T-cell (primary cell): ENCODE measurements at regions of chr15 and their contacts with region 1.

Region 1: GRCh38 chr15:72361176-72361575 is 14.6 kb downstream of the HEXA start:
- DNase-seq: no peak
- ATAC-seq: no peak
- H3K4me3 ChIP-seq: no peak overlapping the region
- H3K4me3 Mint-ChIP-seq: no peak overlapping the region
- H3K27ac ChIP-seq: no peak overlapping the region
- H3K27ac Mint-ChIP-seq: no peak overlapping the region
- H3K4me1 ChIP-seq: peaks cover 0 to 13% of the 10 kb centered on the region in 2 experiments
- H3K4me1 Mint-ChIP-seq: peaks cover 20 to 32% (median 30%) of the 10 kb centered on the region in 3 donors
- H3K27me3 ChIP-seq: no peaks in the 10 kb centered on the region
- H3K27me3 Mint-ChIP-seq: no peaks in the 10 kb centered on the region

Region 2: DNA sequence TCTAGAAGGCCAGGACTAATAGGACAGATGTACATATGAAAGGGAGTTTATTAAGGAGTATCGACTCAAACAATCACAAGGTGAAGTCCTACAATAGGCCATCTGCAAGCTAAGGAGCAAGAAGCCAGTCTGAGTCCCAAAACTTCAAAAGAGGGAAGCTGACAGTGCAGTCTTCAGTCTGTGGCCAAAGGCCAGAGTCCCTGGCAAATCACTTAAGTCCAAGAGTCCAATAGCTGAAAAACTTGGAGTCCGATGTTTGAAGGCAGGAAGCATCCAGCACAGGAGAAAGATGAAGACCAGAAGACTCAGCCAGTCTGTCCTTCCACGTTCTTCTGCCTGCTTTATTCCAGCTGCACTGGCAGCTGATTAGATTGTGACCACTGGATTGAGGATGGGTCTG is 30.2 kb before region 1 on chr15:
- CTCF ChIA-PET with region 1: interaction called in 1 of 2 experiments, 12 read pairs
- POLR2A ChIA-PET with region 1: no interaction called
- DNase-seq: no peak
- ATAC-seq: no peak
- H3K4me3 ChIP-seq: no peak overlapping the region
- H3K4me3 Mint-ChIP-seq: no peak overlapping the region
- H3K27ac ChIP-seq: no peak overlapping the region
- H3K27ac Mint-ChIP-seq: no peak overlapping the region
- H3K4me1 ChIP-seq: no peaks in the 10 kb centered on the region
- H3K4me1 Mint-ChIP-seq: no peaks in the 10 kb centered on the region
- H3K27me3 ChIP-seq: no peaks in the 10 kb centered on the region
- H3K27me3 Mint-ChIP-seq: no peaks in the 10 kb centered on the region